ENCODE measurements at regions of chr17 and their contacts with region 1.

Region 1: DNA sequence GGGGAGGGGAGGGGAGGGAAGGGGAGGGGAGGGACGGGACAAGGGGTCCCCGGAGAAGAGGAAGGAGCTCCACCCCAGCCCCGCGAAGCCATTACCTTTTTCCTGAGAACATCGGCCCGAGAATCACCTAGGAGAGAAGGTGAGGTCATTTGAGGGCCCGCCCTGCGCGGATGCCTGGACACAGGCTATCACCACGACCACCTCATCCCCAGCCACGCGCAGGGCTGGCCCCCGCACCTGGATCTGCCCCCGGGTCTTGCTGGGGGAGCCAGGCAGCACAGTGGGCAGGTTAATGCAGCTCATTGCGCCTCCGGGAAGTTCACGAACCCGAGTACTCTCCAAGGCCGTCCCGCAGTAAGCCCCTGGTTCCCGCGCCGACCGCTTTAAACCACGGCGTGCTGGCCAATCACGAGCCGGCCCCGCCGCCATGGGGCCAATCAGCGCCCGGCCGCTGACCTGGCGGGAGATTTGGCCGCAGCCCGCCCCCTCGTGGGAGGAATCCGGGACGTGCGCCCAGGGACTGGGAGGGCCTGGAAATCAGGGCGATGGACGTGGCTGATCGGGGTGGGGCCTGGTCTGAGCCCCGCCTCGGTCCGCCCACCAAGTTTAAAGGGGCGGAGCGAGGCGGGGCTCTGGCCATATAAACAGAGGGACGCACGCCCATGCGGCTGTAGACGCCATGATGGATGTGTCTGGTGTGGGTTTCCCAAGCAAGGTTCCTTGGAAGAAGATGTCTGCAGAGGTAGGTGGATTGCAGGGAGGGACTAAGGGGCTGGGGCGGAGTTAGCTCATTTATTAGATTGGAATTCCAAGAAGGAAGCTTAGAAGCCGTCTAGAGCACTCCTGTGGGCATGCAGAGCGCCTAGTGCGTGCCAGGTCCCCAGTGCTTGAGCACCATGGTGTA is at the starts of genes AFMID and TK1:
- DNase-seq: peak; percentile 96
- ATAC-seq: peak; percentile 86
- H3K4me3 ChIP-seq: peak within 1 kb of the TSS; percentile 83 to 94 (median 84)
- H3K27ac ChIP-seq: peak within 1 kb of the TSS; percentile 85
- H3K4me1 ChIP-seq: peaks cover 70% of the 10 kb centered on the region
- H3K27me3 ChIP-seq: no peaks in the 10 kb centered on the region; a peak in 1 of 5 replicates
- CTCF ChIP-seq: peak; percentile 98
- EP300 ChIP-seq: peak; percentile 29 to 31; a peak in 1 of 4 replicates
- POLR2A ChIP-seq: peak; percentile 99
- RAD21 ChIP-seq: peak; percentile 77
- total RNA-seq, gene AFMID: 270 and 327 TPM in 2 replicates
- total RNA-seq, gene TK1: 96.0 and 114 TPM in 2 replicates

Region 2: GRCh38 chr17:78112518-78113226 is 74.3 kb before region 1 on chr17:
- CTCF ChIA-PET with region 1: interaction called, 6 read pairs
- POLR2A ChIA-PET with region 1: interaction called, 8 read pairs
- in situ Hi-C with region 1: loop called (anchors 5 kb)
- intact Hi-C with region 1: loop called (anchors 5 kb)
- DNase-seq: peak; percentile 52
- ATAC-seq: peak; percentile 74
- H3K4me3 ChIP-seq: no peak overlapping the region
- H3K27ac ChIP-seq: no peak overlapping the region
- H3K4me1 ChIP-seq: peaks cover 27% of the 10 kb centered on the region
- H3K27me3 ChIP-seq: no peaks in the 10 kb centered on the region
- CTCF ChIP-seq: peak; percentile 99
- EP300 ChIP-seq: no peak
- POLR2A ChIP-seq: 0 out of 4 replicates have a peak, but pooled peaks of 1 of the 2 experiments have one; percentile 12
- RAD21 ChIP-seq: peak; percentile 98

Region 3: DNA sequence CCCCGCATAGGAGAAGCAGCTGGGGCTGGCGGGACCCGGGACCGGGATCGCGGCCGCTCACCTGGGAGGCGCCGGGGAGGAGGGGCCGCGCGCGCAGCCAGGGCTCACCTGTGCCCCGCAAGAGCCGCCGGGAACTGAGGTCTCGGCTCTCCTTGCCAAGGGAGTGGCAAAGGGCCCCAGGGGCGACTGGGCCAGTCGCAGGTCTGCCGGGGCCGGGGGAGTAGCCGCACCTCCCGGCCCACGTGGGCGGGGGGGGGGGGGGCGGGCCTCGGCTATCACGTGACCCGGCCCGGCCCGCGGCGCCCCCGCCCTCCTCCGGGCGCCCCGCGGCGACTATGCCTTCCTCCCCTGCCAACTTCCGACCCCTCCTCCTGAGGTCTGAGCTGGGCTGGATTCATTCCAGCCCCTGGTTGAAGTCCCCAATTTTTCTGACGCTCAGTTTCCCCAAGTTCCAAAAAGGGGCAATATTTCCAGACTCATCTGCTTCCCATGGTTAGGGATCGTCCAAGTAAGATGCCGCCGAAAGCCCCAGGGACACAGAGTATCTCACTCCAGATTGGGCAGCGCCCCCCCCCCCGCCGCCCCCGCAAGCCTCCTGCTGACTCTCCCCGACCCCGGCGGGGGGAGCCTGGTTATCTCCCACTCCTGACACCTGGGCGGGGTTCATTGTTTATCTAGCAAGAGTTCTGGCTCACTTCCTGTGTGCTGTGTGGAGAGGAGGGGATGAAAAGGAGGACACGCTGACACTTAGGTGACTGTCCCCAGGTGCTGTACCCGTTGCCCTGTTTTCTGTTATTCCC is 58.2 kb before region 1 on chr17 and contains the start of gene TMC6:
- CTCF ChIA-PET with region 1: no interaction called
- POLR2A ChIA-PET with region 1: interaction called, 28 read pairs
- in situ Hi-C with region 1: no loop called
- intact Hi-C with region 1: no loop called
- DNase-seq: peak; percentile 87
- ATAC-seq: peak; percentile 58
- H3K4me3 ChIP-seq: peak within 1 kb of the TSS; percentile 67 to 95 (median 86)
- H3K27ac ChIP-seq: peak within 1 kb of the TSS; percentile 91
- H3K4me1 ChIP-seq: peaks cover 55% of the 10 kb centered on the region
- H3K27me3 ChIP-seq: no peaks in the 10 kb centered on the region
- CTCF ChIP-seq: no peak
- EP300 ChIP-seq: no peak
- POLR2A ChIP-seq: peak; percentile 67 to 77
- RAD21 ChIP-seq: peak; percentile 60
- total RNA-seq, gene TMC6: 20.4 and 48.4 TPM in 2 replicates

Region 4: DNA sequence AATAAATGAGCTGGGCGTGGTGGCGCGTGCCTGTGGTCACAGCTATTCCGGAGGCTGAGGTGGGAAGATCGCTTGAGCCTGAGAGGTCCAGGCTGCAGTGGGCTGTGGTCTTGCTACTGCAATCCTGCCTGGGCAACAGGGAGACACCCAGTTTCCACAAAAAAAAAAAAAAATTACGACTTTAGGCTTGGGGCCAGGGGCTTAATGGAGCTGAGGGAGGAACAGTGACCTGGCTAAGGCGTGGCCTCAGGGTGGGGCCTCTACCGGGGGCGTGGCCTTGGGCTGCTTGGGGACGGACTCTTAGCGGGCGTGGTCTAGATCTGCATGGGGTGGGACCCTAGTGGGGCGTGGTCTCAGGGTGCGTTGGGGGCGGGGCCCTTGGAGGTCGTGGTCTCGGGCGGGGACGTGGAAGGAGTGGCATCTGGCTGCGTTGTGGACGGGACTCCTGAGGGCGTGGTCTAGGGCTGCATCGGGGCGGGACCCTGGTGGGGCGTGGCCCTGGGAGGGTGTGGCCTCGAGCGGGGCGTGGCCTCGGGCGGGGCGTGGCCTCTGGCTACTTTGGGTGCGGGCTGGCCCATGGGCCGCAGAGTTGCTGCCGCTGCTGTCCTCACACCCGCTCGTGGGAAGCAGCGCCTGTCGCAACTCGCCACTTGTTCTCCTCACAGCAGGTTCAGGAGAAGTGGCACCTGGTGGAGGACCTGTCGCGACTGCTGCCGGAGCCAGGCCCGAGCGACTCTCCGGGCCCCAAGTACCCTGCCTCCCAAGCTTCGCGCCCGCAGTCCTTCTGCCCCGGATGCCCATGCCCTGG is 46.6 kb before region 1 on chr17:
- CTCF ChIA-PET with region 1: interaction called, 3 read pairs
- POLR2A ChIA-PET with region 1: interaction called, 16 read pairs
- in situ Hi-C with region 1: no loop called
- intact Hi-C with region 1: loop called (anchors 1 kb)
- DNase-seq: peak; percentile 96
- ATAC-seq: peak; percentile 64
- H3K4me3 ChIP-seq: peak overlapping the region; percentile 25 to 67 (median 26); a peak in 5 of 6 replicates
- H3K27ac ChIP-seq: no peak overlapping the region
- H3K4me1 ChIP-seq: peaks cover 90% of the 10 kb centered on the region
- H3K27me3 ChIP-seq: peaks cover 7 to 26% of the 10 kb centered on the region in 2 experiments; a peak in 4 of 5 replicates
- CTCF ChIP-seq: no peak
- EP300 ChIP-seq: no peak
- POLR2A ChIP-seq: peak in 1 of 2 experiments; percentile 26; a peak in 1 of 4 replicates
- RAD21 ChIP-seq: no peak

Region 5: GRCh38 chr17:78168242-78168902 is 18.6 kb before region 1 on chr17 and contains the start of gene SYNGR2:
- CTCF ChIA-PET with region 1: no interaction called
- POLR2A ChIA-PET with region 1: interaction called, 12 read pairs
- in situ Hi-C with region 1: no loop called
- intact Hi-C with region 1: loop called (anchors 2 kb)
- DNase-seq: peak; percentile 74
- ATAC-seq: peak; percentile 69
- H3K4me3 ChIP-seq: peak within 1 kb of the TSS; percentile 73 to 88 (median 84)
- H3K27ac ChIP-seq: peak within 1 kb of the TSS; percentile 51
- H3K4me1 ChIP-seq: peaks cover 62% of the 10 kb centered on the region
- H3K27me3 ChIP-seq: peaks cover 0 to 2% of the 10 kb centered on the region in 2 experiments; a peak in 1 of 5 replicates
- CTCF ChIP-seq: peak; percentile 32; the same call in 1 of the 2 replicates
- EP300 ChIP-seq: peak in 1 of 2 experiments; percentile 41; a peak in 2 of 4 replicates
- POLR2A ChIP-seq: peak; percentile 65 to 92
- RAD21 ChIP-seq: peak; percentile 76
- total RNA-seq, gene SYNGR2: 28.7 and 46.7 TPM in 2 replicates

Region 6: GRCh38 chr17:78197147-78197832 is 10.3 kb after region 1 on chr17:
- CTCF ChIA-PET with region 1: no interaction called
- POLR2A ChIA-PET with region 1: interaction called, 25 read pairs
- in situ Hi-C with region 1: no loop called
- intact Hi-C with region 1: no loop called
- DNase-seq: no peak
- ATAC-seq: no peak
- H3K4me3 ChIP-seq: no peak overlapping the region
- H3K27ac ChIP-seq: no peak overlapping the region
- H3K4me1 ChIP-seq: peaks cover 40% of the 10 kb centered on the region
- H3K27me3 ChIP-seq: no peaks in the 10 kb centered on the region
- CTCF ChIP-seq: no peak
- EP300 ChIP-seq: no peak
- POLR2A ChIP-seq: no peak; a peak in 1 of 4 replicates
- RAD21 ChIP-seq: no peak

Region 7: GRCh38 chr17:78202666-78203065 is 15.7 kb after region 1 on chr17:
- CTCF ChIA-PET with region 1: no interaction called
- POLR2A ChIA-PET with region 1: interaction called, 25 read pairs
- in situ Hi-C with region 1: no loop called
- intact Hi-C with region 1: no loop called
- DNase-seq: no peak
- ATAC-seq: no peak
- H3K4me3 ChIP-seq: no peak overlapping the region
- H3K27ac ChIP-seq: no peak overlapping the region
- H3K4me1 ChIP-seq: no peaks in the 10 kb centered on the region
- H3K27me3 ChIP-seq: no peaks in the 10 kb centered on the region
- CTCF ChIP-seq: no peak
- EP300 ChIP-seq: no peak
- POLR2A ChIP-seq: peak in 1 of 2 experiments; percentile 20; a peak in 1 of 4 replicates
- RAD21 ChIP-seq: no peak

Measured in HepG2 (cell line).